Right cardiac atrium (tissue), 5 donors: ENCODE measurements at regions of chr21 and their contacts with region 1.

Region 1: DNA sequence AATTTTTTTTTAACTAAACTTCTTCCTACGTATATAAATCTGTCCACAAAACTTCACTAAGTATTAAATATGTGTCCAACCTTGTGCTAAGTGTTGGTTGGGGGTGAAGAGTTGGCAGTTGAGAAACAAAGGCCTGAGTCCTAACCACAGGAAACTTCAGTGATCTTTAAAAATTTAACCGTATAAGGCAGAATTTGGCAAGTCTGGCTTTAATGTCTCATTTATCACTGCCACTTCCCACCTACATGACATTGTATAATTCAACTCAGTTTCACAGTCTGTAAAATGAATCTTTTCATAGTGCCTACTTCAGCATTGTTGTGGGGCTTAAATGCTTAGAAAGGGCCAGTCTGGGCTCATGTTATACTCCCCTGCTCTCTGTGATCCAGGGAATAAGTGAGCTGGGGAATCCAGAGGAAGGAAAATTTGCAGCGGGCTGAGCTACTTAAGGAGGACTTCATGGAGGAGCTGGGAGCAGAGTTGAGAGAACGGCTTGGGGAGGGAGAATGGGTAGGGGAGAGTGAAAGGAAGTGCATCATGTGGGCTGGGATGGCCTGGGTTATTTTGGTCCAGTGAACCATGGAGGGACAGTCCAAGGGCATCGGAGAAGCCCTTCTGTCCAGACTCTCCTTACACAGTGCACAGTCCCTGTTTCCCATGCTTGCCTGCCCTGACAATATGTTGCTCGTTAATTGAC is 14.5 kb downstream of the IFNAR2 start:
- DNase-seq: no peak
- ATAC-seq: peak in 1 of 2 donors; percentile 58
- H3K4me3 ChIP-seq: no peak overlapping the region
- H3K27ac ChIP-seq: peak overlapping the region; percentile 83
- H3K4me1 ChIP-seq: peaks cover 4% of the 10 kb centered on the region
- H3K27me3 ChIP-seq: no peaks in the 10 kb centered on the region

Region 2: DNA sequence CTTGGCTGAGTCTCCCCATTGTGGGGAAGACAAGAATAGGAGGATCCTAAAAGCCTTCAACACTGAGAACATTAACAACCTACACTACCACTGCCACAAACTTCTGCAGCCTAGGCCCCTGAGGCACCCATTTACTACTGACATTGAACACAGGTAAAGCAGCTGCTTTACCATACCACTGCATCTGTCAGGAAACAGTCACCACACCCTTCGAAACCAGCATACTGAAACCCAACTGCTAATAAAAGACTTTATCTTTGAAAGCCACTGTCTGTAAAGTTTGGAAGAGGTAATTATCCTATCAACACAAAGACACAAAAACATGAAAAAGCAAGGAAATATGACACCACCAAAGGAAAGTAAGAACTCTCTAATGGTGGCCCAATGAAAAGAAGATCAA is 87.9 kb after region 1 on chr21:
- intact Hi-C with region 1: loop called in 1 of 4 experiments (anchors 10 kb)
- DNase-seq: no peak
- ATAC-seq: no peak
- H3K4me3 ChIP-seq: no peak overlapping the region
- H3K27ac ChIP-seq: no peak overlapping the region
- H3K4me1 ChIP-seq: peaks cover 2% of the 10 kb centered on the region
- H3K27me3 ChIP-seq: no peaks in the 10 kb centered on the region